Activated CD4-positive, alpha-beta memory T cell treated with anti-CD3 and anti-CD28 coated beads for 36 hours (primary cell): ENCODE measurements at regions of chr22 and their contacts with region 1.

Region 1: GRCh38 chr22:39319270-39320022 is at the start of gene RPL3:
- DNase-seq: peak; percentile 97
- H3K4me3 Mint-ChIP-seq: peak within 1 kb of the TSS; percentile 100
- H3K27ac Mint-ChIP-seq: peak within 1 kb of the TSS; percentile 99
- H3K4me1 Mint-ChIP-seq: peaks cover 37% of the 10 kb centered on the region
- H3K27me3 Mint-ChIP-seq: no peaks in the 10 kb centered on the region
- total RNA-seq, gene RPL3: 2,986 to 3,013 TPM

Region 2: DNA sequence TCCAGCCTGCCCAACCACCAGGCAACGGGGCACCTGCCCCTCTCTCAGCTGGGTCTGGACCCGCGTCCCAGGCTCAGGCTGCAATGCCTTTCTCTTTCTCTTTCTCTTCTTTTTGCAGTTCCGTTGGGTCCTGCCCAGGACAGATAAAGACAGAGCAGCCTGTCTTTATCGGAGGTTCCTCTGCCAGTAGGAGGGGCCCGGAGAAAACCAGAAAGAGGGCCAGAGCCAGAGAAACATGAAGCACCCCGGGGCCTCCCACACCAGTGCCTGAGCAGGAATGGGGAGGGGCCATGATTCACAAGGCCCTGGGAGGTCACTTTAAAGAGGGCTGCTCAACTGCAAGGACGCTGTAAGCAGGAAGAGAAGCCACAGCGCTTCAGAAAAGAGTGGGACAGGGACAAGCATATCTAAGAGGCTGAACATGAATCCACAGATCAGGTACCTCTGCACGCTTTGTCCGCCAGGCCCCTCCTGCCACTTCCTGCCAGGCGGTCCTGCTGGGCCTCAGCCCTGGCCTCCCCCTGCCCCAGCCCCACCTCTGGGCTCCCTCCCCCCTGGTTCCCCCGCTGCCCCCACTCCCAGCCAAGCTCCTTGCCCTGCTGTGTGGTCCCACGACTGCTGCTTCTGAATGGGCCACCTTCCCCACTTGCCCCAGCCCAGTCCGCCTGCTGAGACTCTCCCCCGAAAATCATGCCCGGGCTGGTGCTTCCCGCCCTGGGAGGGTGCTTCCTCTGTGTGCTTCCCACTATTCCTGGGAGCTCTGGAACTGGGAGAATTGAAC is 305.3 kb before region 1 on chr22 and contains the start of gene APOBEC3C:
- CTCF ChIA-PET with region 1: no interaction called
- POLR2A ChIA-PET with region 1: interaction called, 3 read pairs
- intact Hi-C with region 1: loop called (anchors 5 kb)
- DNase-seq: peak; percentile 92
- H3K4me3 Mint-ChIP-seq: peak within 1 kb of the TSS; percentile 97
- H3K27ac Mint-ChIP-seq: peak within 1 kb of the TSS; percentile 96
- H3K4me1 Mint-ChIP-seq: peaks cover 48% of the 10 kb centered on the region
- H3K27me3 Mint-ChIP-seq: no peaks in the 10 kb centered on the region
- total RNA-seq, gene APOBEC3C: 141 to 142 TPM

Region 3: DNA sequence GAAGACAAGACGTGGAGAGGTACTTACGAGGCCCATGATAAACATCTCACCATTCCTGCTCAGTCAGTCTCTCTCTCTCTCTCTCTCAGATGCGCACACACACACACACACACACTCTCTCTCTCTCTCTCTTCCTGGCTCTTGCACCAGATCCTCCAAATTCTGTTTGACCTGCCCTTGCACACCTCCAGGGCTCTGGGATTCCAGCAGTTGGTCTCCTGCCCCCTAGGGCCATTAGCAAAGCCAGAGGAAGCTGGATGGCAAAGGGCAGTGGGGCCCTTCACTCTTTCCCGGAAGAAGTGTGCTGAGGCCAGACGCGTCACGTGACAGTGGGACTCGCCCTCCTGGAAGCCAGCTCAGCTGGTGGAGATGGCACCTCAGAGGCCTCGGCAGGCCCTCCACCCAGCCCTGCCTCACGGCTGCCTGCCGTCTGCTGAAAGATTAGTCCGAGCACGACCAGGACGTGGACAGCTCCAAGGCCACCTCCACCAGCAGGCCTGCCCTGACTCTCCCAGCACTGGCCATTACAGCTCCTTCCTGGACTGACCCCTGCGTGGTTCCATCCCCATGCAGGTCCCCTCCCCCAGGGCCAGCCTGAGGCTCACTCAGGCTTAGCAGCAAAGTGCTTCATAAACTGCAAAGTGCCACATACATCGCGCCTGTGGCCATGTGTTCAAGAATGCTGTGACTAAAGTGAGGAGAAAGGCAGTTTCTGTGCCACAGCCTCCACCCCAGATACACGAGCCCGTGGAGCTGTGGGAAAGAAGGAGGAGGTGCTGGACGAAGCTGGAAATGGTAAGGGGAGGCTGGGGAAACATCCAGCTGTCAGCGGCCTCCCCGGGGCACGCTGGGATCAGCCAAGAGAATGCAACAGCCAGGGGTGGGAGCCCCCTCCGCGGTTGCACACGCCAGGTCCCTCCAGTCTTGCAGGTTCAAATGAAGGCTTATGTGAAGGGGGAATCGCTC is 78.3 kb before region 1 on chr22:
- CTCF ChIA-PET with region 1: interaction called, 3 read pairs
- POLR2A ChIA-PET with region 1: interaction called, 7 read pairs
- intact Hi-C with region 1: loop called (anchors 2 kb)
- DNase-seq: peak; percentile 82
- H3K4me3 Mint-ChIP-seq: peak overlapping the region; percentile 85
- H3K27ac Mint-ChIP-seq: peak overlapping the region; percentile 88
- H3K4me1 Mint-ChIP-seq: peaks cover 58% of the 10 kb centered on the region
- H3K27me3 Mint-ChIP-seq: peaks cover 13% of the 10 kb centered on the region

Region 4: DNA sequence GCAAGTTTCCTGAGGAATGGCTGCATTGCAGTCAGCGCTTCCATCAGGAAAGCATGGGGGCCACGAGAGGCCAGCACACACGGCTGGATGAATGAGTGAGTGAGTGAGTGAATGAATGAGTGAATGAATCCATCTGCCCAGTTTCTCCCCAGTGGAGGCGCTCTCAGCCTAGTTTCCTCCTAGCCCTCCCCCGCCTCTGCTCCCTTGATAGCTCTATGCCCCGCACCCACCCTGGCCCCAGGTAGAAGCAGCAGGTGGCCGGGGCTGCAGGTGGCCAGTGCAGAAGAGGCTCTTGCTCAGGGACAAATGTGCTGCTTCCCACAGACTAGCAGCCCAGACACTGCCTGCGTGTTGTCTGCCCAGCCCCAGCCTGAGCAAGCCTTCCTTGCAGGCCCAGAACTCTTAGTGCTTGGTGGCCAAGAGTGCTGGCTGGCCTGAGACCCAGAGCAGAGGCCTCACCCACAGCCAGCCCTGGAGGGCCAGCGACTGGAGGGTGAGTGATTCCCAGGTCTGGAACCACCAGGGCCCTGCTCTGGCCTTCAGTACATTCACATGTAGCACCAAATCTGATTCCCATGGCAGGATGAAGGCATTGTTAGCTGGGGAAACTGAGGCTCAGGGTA is 43.5 kb before region 1 on chr22:
- CTCF ChIA-PET with region 1: no interaction called
- POLR2A ChIA-PET with region 1: no interaction called
- intact Hi-C with region 1: no loop called
- DNase-seq: no peak
- H3K4me3 Mint-ChIP-seq: no peak overlapping the region
- H3K27ac Mint-ChIP-seq: no peak overlapping the region
- H3K4me1 Mint-ChIP-seq: no peaks in the 10 kb centered on the region
- H3K27me3 Mint-ChIP-seq: peaks cover 9% of the 10 kb centered on the region

Region 5: DNA sequence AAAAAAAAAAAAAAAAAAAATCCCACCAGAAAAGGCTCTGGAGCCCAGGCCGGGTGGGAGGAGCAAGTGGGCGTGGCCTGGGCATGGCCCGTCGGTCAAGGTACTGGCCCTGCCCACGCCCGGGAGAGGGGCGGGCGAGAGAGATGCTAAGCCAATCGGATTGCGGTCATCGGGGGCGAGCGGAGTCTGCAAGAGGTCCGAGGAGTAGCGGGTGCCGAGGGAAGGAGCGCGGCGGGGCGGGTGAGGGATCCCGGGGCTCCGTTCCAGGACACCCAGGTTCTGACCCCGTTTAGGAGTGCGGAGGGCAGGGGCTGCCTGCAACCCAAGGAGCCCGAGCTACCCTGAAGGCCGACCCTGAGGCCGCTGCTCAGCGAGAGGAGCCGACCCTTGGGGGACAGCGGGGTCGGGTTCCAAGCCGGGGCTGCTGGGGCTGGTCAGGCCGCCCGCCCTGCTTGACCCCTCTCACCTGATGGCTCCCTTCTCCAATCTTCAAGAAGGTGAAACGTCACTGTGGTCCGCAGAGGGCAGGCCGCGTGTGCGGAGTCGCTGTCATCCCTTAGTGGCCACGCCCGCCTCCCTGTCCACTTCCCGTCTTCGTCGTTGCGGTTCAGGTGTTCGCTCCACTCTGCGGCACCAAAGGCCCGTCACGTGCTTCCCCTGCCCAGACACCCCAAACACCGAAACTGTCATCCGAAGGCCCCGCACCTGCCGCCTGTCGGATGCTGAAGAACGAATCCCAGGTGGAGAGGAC is 69.0 kb after region 1 on chr22:
- CTCF ChIA-PET with region 1: interaction called, 5 read pairs
- POLR2A ChIA-PET with region 1: no interaction called
- intact Hi-C with region 1: loop called (anchors 5 kb)
- DNase-seq: peak; percentile 92
- H3K4me3 Mint-ChIP-seq: peak overlapping the region; percentile 81
- H3K27ac Mint-ChIP-seq: peak overlapping the region; percentile 80
- H3K4me1 Mint-ChIP-seq: peaks cover 15% of the 10 kb centered on the region
- H3K27me3 Mint-ChIP-seq: no peaks in the 10 kb centered on the region

Region 6: DNA sequence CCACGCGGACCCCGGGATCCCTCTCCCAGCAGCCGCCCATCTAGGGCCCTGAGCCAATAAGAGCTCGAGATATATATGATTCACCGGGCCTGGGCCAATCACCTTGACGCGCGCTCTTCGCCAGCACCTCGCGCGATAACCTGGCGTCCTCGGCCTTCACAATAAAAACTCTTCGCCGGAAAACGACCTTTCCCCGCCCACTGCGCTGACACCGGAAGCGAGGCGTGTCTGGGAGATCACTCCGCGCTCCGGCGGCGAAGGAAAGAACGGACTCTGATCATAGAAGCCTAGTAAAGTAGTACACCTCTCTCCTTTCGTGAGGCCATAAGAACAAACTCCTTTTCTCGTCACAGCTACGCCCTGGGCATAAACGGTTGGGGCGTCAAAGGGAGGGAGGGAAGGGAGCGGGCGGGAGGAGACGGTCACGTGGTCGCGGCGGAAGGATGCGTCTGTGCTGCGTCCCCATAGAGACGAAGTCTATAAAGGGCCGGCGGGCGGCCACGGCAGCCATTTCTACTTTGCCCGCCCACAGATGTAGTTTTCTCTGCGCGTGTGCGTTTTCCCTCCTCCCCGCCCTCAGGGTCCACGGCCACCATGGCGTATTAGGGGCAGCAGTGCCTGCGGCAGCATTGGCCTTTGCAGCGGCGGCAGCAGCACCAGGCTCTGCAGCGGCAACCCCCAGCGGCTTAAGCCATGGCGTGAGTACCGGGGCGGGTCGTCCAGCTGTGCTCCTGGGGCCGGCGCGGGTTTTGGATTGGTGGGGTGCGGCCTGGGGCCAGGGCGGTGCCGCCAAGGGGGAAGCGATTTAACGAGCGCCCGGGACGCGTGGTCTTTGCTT is 200.8 kb after region 1 on chr22 and contains the start of gene ATF4:
- CTCF ChIA-PET with region 1: interaction called, 3 read pairs
- POLR2A ChIA-PET with region 1: interaction called, 15 read pairs
- intact Hi-C with region 1: loop called (anchors 1 kb)
- DNase-seq: peak; percentile 98
- H3K4me3 Mint-ChIP-seq: peak within 1 kb of the TSS; percentile 84
- H3K27ac Mint-ChIP-seq: peak within 1 kb of the TSS; percentile 98
- H3K4me1 Mint-ChIP-seq: peaks cover 50% of the 10 kb centered on the region
- H3K27me3 Mint-ChIP-seq: peaks cover 4% of the 10 kb centered on the region
- total RNA-seq, gene ATF4: 437 to 455 TPM